Spleen (tissue), 13 donors: ENCODE measurements at regions of chr5 and their contacts with region 1.

Region 1: GRCh38 chr5:143403593-143404415 is at the start of gene NR3C1:
- DNase-seq: peak; percentile 99
- H3K4me3 ChIP-seq: peak within 1 kb of the TSS; percentile 70 to 89 (median 86)
- H3K27ac ChIP-seq: peak within 1 kb of the TSS; percentile 98 to 100 (median 100)
- H3K4me1 ChIP-seq: peaks cover 24 to 42% (median 34%) of the 10 kb centered on the region in 6 donors
- H3K27me3 ChIP-seq: no peaks in the 10 kb centered on the region
- CTCF ChIP-seq: peak; percentile 12 to 86 (median 72)
- POLR2A ChIP-seq: no peak
- total RNA-seq, gene NR3C1: 58.4 to 97.8 (median 85.0) TPM

Region 2: DNA sequence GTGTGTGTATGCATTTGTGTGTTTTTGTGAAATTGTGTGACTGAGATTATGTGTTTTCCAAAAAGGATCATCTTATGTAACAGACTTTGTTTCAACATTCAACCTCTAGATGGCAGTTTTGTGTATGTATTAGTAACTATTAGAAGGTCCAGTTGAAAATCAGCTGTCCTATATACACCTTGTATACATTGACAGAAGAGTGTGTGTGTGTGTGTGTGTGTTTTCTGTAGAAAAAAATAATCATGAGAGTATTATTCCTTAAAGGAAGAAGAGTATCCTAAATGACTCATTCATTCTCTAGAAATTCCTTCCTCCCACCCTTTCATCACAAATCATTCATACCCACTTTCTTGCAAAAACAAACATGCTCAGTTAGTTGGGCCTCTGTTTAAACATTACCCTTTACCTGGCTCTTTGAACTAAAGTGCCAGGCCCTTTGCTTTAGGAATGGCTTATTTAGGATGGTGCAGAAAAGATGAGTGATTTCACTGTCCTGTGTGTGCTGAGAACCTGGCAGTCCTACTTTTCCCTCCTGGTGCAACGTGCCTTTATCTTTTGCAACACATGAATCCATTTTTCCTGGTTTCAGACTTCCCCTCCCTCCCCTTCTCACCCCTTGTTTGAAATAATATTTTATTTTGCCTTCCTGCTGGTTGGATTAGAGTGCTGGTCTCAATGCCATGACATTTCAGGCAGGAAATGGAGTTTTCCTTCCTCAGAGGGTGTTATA is 481.4 kb before region 1 on chr5:
- intact Hi-C with region 1: loop called (anchors 10 kb)
- DNase-seq: no peak
- H3K4me3 ChIP-seq: no peak overlapping the region
- H3K27ac ChIP-seq: peak overlapping the region in 5 of 8 donors; percentile 10 to 49 (median 41)
- H3K4me1 ChIP-seq: peaks cover 0 to 56% (median 34%) of the 10 kb centered on the region in 6 donors
- H3K27me3 ChIP-seq: no peaks in the 10 kb centered on the region
- CTCF ChIP-seq: peak in 9 of 11 experiments; percentile 9 to 67 (median 45)
- POLR2A ChIP-seq: no peak

Region 3: DNA sequence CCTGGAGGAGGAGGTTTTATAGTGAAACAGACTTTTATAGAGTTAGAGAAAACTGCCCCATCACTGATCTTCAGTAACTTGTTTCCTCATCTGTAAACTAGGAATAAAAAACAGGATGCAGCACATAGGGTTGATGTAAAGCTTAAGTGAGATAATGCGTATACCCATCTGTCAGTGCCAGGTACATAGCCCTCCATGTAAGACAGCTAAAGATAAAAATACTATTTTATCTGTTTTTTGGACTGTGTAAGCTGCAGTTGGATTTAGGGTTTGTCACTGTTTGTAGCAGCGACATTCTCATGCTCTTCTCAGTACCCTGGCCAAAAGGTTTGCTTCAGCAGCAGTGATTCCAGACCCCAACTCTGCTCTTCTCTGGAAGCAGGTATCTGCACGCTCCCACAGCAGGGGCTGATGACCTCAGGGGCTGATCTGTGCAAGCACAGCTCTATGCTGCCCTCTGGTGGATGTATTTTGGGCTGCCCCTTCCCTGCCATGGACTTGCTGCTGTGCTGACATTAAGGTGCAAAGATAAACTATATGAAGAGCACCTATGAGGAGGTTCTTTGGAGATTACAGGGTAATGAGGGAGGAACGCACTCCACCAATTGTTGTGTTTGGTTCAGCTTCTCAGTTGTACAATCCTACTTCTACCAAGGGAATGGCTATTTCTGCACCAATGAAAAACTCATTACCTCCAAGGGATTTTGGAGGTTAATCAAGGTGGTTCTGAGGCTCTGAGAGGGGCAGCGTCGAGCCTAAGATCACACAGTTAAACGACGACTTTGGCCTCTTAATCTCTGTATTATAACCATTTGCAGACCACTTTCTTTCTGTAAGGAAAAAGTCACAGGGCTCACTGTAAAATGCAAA is 421.3 kb after region 1 on chr5:
- intact Hi-C with region 1: loop called (anchors 10 kb)
- DNase-seq: peak; percentile 92
- H3K4me3 ChIP-seq: no peak overlapping the region
- H3K27ac ChIP-seq: no peak overlapping the region
- H3K4me1 ChIP-seq: peaks cover 0 to 24% (median 3%) of the 10 kb centered on the region in 6 donors
- H3K27me3 ChIP-seq: no peaks in the 10 kb centered on the region
- CTCF ChIP-seq: peak; percentile 83 to 96 (median 94)
- POLR2A ChIP-seq: no peak